Naive thymus-derived CD4-positive, alpha-beta T cell (primary cell): ENCODE measurements at regions of chr15 and their contacts with region 1.

Region 1: GRCh38 chr15:34038023-34038870 is 757 bp downstream of the AVEN start:
- DNase-seq: peak; percentile 52 to 76 (median 72)
- ATAC-seq: peak; percentile 90
- H3K4me3 ChIP-seq: peak overlapping the region; percentile 100
- H3K4me3 Mint-ChIP-seq: peak overlapping the region; percentile 80 to 97 (median 94)
- H3K27ac ChIP-seq: peak overlapping the region; percentile 80
- H3K27ac Mint-ChIP-seq: peak overlapping the region; percentile 87 to 96 (median 94)
- H3K4me1 ChIP-seq: peaks cover 8 to 14% of the 10 kb centered on the region in 2 donors
- H3K4me1 Mint-ChIP-seq: peaks cover 12 to 25% (median 23%) of the 10 kb centered on the region in 7 donors
- H3K27me3 ChIP-seq: no peaks in the 10 kb centered on the region
- H3K27me3 Mint-ChIP-seq: no peaks in the 10 kb centered on the region

Region 2: GRCh38 chr15:33194704-33195670 is 843.3 kb before region 1 on chr15 and contains the start of gene FMN1:
- CTCF ChIA-PET with region 1: no interaction called
- POLR2A ChIA-PET with region 1: no interaction called
- intact Hi-C with region 1: loop called in 1 of 2 experiments (anchors 10 kb)
- DNase-seq: peak; percentile 61 to 92 (median 84)
- ATAC-seq: peak; percentile 100
- H3K4me3 ChIP-seq: peak within 1 kb of the TSS; percentile 83
- H3K4me3 Mint-ChIP-seq: peak within 1 kb of the TSS; percentile 71 to 92 (median 85)
- H3K27ac ChIP-seq: peak within 1 kb of the TSS; percentile 59
- H3K27ac Mint-ChIP-seq: peak within 1 kb of the TSS in 8 of 9 donors; percentile 77 to 95 (median 82)
- H3K4me1 ChIP-seq: peaks cover 0 to 9% of the 10 kb centered on the region in 2 donors
- H3K4me1 Mint-ChIP-seq: peaks cover 4 to 22% (median 14%) of the 10 kb centered on the region in 7 donors
- H3K27me3 ChIP-seq: no peaks in the 10 kb centered on the region
- H3K27me3 Mint-ChIP-seq: peaks cover 0 to 39% (median 0%) of the 10 kb centered on the region in 5 donors
- total RNA-seq, gene FMN1: 0.02 to 32.2 (median 0.70) TPM

Region 3: GRCh38 chr15:33926260-33926659 is 112.0 kb before region 1 on chr15:
- CTCF ChIA-PET with region 1: no interaction called
- POLR2A ChIA-PET with region 1: no interaction called
- intact Hi-C with region 1: no loop called
- DNase-seq: no peak
- ATAC-seq: no peak
- H3K4me3 ChIP-seq: no peak overlapping the region
- H3K4me3 Mint-ChIP-seq: no peak overlapping the region
- H3K27ac ChIP-seq: no peak overlapping the region
- H3K27ac Mint-ChIP-seq: no peak overlapping the region
- H3K4me1 ChIP-seq: no peaks in the 10 kb centered on the region
- H3K4me1 Mint-ChIP-seq: no peaks in the 10 kb centered on the region
- H3K27me3 ChIP-seq: no peaks in the 10 kb centered on the region
- H3K27me3 Mint-ChIP-seq: no peaks in the 10 kb centered on the region

Region 4: GRCh38 chr15:34018021-34018645 is 20.1 kb before region 1 on chr15:
- CTCF ChIA-PET with region 1: no interaction called
- POLR2A ChIA-PET with region 1: interaction called, 4 read pairs
- intact Hi-C with region 1: loop called in 1 of 2 experiments (anchors 2 kb)
- DNase-seq: peak in 7 of 9 donors; percentile 28 to 56 (median 48)
- ATAC-seq: peak; percentile 45
- H3K4me3 ChIP-seq: no peak overlapping the region
- H3K4me3 Mint-ChIP-seq: peak overlapping the region; percentile 64 to 85 (median 72)
- H3K27ac ChIP-seq: no peak overlapping the region
- H3K27ac Mint-ChIP-seq: peak overlapping the region in 7 of 9 donors; percentile 41 to 90 (median 78)
- H3K4me1 ChIP-seq: peaks cover 3 to 6% of the 10 kb centered on the region in 2 donors
- H3K4me1 Mint-ChIP-seq: peaks cover 8 to 14% (median 11%) of the 10 kb centered on the region in 7 donors
- H3K27me3 ChIP-seq: no peaks in the 10 kb centered on the region
- H3K27me3 Mint-ChIP-seq: peaks cover 0 to 3% (median 0%) of the 10 kb centered on the region in 5 donors

Region 5: GRCh38 chr15:34101366-34102175 is 63.3 kb after region 1 on chr15 and contains the starts of genes EMC7 and PGBD4:
- CTCF ChIA-PET with region 1: no interaction called
- POLR2A ChIA-PET with region 1: interaction called, 6 read pairs
- intact Hi-C with region 1: loop called (anchors 1 kb)
- DNase-seq: peak; percentile 98 to 99 (median 99)
- ATAC-seq: peak; percentile 99
- H3K4me3 ChIP-seq: peak within 1 kb of the TSS; percentile 66
- H3K4me3 Mint-ChIP-seq: peak within 1 kb of the TSS; percentile 91 to 100 (median 96)
- H3K27ac ChIP-seq: peak within 1 kb of the TSS; percentile 96
- H3K27ac Mint-ChIP-seq: peak within 1 kb of the TSS; percentile 97 to 100 (median 98)
- H3K4me1 ChIP-seq: peaks cover 16 to 27% of the 10 kb centered on the region in 2 donors
- H3K4me1 Mint-ChIP-seq: peaks cover 15 to 56% (median 45%) of the 10 kb centered on the region in 7 donors
- H3K27me3 ChIP-seq: no peaks in the 10 kb centered on the region
- H3K27me3 Mint-ChIP-seq: peaks cover 0 to 3% (median 0%) of the 10 kb centered on the region in 5 donors
- total RNA-seq, gene EMC7: 30.1 to 65.1 (median 36.9) TPM
- total RNA-seq, gene PGBD4: 3.2 to 6.5 (median 4.2) TPM

Region 6: GRCh38 chr15:34987985-34988873 is 950.0 kb after region 1 on chr15 and contains the start of gene ZNF770:
- CTCF ChIA-PET with region 1: no interaction called
- POLR2A ChIA-PET with region 1: interaction called, 6 read pairs
- intact Hi-C with region 1: loop called in 1 of 2 experiments (anchors 2 kb)
- DNase-seq: peak; percentile 67 to 91 (median 85)
- ATAC-seq: peak; percentile 95
- H3K4me3 ChIP-seq: peak within 1 kb of the TSS; percentile 99
- H3K4me3 Mint-ChIP-seq: peak within 1 kb of the TSS; percentile 93 to 100 (median 98)
- H3K27ac ChIP-seq: peak within 1 kb of the TSS; percentile 97
- H3K27ac Mint-ChIP-seq: peak within 1 kb of the TSS; percentile 96 to 100 (median 99)
- H3K4me1 ChIP-seq: peaks cover 22 to 25% of the 10 kb centered on the region in 2 donors
- H3K4me1 Mint-ChIP-seq: peaks cover 20 to 55% (median 45%) of the 10 kb centered on the region in 7 donors
- H3K27me3 ChIP-seq: no peaks in the 10 kb centered on the region
- H3K27me3 Mint-ChIP-seq: no peaks in the 10 kb centered on the region
- total RNA-seq, gene ZNF770: 32.5 to 69.9 (median 50.2) TPM